Left ventricle myocardium superior (tissue), 1 donor: ENCODE measurements at regions of chr11 and their contacts with region 1.

Region 1: DNA sequence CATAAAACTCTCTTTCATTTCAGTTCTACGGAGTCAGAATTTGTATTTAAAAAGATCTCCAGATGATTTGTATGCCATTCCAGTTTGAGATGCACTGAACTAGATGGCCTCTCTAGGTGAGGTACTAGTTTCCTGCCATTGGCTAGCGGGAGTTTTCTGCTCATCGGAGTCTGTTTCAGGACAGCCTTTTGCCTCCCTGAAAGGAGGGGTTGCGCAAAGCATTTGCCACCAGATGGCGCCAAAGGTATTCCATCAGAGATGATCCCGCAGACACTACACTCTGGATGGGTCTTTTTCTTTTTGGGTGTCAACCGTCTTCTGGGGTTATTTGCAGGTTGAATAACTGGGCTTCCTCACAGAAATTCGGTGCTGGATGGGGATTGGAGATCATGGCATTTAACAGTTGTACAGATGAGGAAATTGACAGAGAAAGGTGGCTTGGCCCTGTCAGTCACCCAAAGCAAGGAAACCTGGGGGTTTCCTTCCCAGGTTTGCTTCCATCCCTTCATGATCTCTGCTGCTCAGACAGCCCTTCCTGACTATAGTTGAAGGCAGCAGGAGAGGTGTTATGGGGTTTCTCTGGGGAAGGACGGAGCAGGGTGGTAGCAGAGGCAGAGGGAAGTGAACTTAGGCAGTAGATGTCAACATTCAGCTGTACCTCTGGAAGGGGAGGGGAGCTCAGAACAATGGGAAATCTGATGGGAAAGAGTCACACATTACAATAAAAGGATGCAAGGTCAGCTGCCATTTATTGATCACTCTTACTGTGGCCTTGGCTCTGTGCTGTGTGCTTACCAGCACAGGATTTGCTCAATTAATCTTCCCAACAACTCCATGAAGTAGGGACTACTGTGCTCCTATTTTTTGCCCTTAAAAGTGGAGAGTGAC is 81.6 kb downstream of the CCDC81 start:
- DNase-seq: peak; percentile 85
- ATAC-seq: peak; percentile 83

Region 2: DNA sequence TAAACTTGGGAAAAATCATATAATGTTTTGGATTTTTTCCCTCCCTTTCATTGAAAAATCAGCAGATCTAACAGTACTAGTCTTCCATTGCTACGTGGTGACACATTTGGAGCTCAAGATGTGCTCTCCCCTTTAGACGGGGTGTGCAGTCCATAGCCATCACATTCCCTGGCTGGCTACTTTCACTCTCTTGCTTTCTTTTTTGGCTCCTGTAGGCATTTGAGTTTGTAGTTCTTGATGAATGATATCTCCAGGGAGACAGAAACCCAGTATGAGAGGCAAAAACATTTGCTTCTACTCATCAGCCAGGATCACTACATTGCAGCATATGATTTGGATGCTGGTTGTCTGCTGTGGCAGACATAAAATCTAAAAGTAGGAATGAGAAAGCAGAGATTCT is 69.5 kb before region 1 on chr11:
- intact Hi-C with region 1: no loop called
- DNase-seq: no peak
- ATAC-seq: no peak

Region 3: DNA sequence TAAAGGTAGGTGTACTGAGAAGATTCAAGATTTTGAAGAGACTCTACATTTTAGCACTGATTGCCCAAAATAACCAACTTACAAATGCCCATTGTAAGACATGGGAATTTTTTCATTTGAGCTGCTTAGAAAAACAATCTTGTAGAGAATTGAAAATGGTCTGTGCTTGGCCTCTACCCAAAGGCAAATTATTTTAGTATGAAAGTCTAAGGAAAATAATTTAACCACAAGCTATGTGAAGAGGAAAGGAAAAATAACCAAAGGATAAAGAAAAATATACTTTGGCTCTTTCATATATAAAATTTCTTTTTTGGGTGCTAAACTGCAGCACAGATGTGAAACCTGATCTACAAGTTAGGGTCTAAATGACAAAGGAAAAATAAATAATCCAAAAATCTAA is 161.2 kb after region 1 on chr11:
- intact Hi-C with region 1: loop called (anchors 10 kb)
- DNase-seq: no peak
- ATAC-seq: no peak

Region 4: DNA sequence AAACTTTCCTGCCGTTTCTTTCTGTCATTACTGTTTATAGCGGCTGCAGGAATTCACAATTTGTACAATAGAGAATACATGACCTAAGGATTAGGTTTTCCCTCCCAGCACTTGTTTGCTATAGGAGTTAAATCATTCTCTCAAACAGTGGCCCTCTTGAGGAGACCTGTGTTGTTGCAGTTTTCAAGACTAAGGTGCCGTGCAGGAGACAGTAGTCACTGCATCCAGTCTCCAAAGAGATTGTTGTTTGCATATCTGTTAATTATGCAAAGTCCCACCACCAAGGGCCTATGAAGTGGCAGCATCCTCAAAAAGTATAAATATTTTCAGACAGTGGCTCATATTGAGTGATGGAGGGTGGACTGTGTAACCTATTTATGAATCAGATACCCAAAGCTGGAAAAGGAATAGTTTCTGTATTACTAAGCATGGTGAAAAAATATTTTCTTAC is 346.3 kb after region 1 on chr11:
- intact Hi-C with region 1: loop called (anchors 5 kb)
- DNase-seq: no peak
- ATAC-seq: peak; percentile 24

Region 5: DNA sequence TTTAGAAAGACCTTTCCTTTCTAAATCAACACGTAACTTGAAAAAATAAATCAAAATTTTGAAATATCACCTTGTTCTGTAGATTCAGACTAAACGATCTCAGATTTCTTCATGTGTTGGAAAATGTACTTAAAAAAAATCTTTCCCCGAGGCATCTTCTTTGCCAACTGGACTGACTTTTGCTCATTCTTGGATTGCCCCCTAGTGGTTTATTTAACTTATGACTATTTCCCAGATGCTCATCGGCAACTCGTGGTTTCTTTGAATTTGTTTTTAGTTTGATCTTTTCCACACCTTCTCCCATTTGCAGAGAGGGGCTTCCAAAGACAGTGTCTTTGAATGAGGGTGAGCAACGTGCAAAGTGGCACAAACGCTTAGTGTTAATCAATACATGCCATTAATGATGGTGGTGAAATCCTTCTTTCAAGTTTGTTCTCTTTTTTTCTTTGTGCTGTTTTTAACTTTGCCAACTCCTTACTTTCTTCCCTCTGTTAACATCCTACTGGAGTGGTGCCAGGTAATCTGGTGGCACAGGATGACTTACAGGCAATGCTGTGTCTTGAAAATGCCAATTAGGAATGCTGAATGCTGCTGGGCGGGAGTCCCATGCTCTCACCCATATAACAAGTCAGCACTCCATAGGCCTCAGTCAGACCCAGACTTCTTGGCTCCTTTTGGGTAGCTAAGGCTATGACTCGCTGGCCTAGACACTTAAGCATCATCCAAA is 362.3 kb after region 1 on chr11:
- intact Hi-C with region 1: loop called (anchors 2 kb)
- DNase-seq: no peak
- ATAC-seq: peak; percentile 49